Psoas muscle (tissue), 8 donors: ENCODE measurements at regions of chr1 and their contacts with region 1.

Region 1: GRCh38 chr1:78126506-78126905 is 80.7 kb downstream of the GIPC2 start:
- DNase-seq: no peak
- ATAC-seq: peak in 2 of 4 donors; percentile 35 to 62
- H3K4me3 ChIP-seq: no peak overlapping the region
- H3K27ac ChIP-seq: no peak overlapping the region
- H3K4me1 ChIP-seq: no peaks in the 10 kb centered on the region
- H3K27me3 ChIP-seq: no peaks in the 10 kb centered on the region
- CTCF ChIP-seq: no peak

Region 2: DNA sequence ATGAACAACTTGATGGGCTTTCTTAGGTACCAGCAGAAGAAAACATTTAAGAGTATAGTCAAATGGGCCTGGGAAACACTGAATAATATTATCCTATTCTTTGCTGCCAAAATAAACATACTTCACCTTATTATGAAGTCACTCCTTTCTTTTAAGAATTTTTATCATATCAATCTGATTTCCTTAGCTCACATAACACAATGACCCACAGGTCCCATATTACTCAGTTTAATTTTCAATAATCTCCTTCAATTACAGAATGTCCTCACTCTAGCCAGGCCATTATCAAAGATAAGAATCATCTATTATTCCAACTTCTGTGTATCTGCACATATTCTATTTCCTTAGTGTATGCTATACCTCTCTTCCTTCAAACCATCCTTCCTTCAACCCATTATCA is 970.3 kb before region 1 on chr1:
- intact Hi-C with region 1: loop called in 1 of 2 experiments (anchors 10 kb)
- DNase-seq: no peak
- ATAC-seq: no peak
- H3K4me3 ChIP-seq: no peak overlapping the region
- H3K27ac ChIP-seq: no peak overlapping the region
- H3K4me1 ChIP-seq: no peaks in the 10 kb centered on the region
- H3K27me3 ChIP-seq: no peaks in the 10 kb centered on the region
- CTCF ChIP-seq: no peak

Region 3: GRCh38 chr1:78426408-78426807 is 299.9 kb after region 1 on chr1:
- intact Hi-C with region 1: no loop called
- DNase-seq: no peak
- ATAC-seq: no peak
- H3K4me3 ChIP-seq: no peak overlapping the region
- H3K27ac ChIP-seq: no peak overlapping the region
- H3K4me1 ChIP-seq: no peaks in the 10 kb centered on the region
- H3K27me3 ChIP-seq: no peaks in the 10 kb centered on the region
- CTCF ChIP-seq: no peak